ENCODE measurements at regions of chr21 and their contacts with region 1.

Region 1: GRCh38 chr21:46323227-46324128 is at the start of gene C21orf58:
- DNase-seq: peak; percentile 95
- H3K4me3 ChIP-seq: peak within 1 kb of the TSS; percentile 95
- H3K27ac ChIP-seq: peak within 1 kb of the TSS; percentile 94
- H3K27me3 ChIP-seq: no peaks in the 10 kb centered on the region
- CTCF ChIP-seq: no peak
- polyA plus RNA-seq, gene C21orf58: 1.2 TPM in 2 replicates

Region 2: DNA sequence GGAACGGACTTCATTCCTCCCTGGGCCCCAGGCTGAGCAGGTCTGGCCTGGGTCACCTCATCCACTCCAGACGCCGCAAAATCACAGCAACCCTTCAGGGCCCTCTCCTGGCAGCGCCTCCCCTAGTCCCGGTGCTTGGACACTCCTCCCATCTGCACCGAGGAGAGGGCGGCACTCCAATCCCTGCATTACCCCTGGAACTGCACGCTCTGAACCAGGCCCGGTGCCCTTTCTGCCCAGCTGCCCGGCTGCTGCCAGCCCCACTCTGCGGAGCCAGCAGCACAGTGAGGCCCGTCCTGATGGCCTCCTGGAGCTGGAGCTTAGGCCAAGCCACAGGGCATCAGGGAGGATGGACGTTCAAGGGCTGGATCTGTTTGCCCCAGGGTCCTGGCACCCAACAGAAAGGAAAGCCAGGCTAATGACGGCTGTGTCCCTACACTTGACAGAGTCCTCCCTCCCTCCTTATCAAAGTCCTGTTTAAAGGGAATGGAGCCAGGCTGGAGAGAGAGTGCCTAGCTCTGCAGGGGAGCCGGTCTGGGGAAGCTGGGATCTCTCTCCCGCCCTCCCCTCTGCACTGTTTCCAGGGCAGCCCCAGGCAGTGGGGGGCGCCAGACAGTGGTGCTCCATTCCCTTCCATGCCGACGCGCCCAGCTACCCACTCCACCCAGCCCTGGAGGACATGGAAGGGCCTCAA is 212.8 kb before region 1 on chr21:
- CTCF ChIA-PET with region 1: no interaction called
- POLR2A ChIA-PET with region 1: no interaction called
- DNase-seq: no peak
- H3K4me3 ChIP-seq: no peak overlapping the region
- H3K27ac ChIP-seq: no peak overlapping the region
- H3K27me3 ChIP-seq: no peaks in the 10 kb centered on the region
- CTCF ChIP-seq: no peak

Region 3: GRCh38 chr21:46144464-46145070 is 178.9 kb before region 1 on chr21:
- CTCF ChIA-PET with region 1: interaction called, 10 read pairs
- POLR2A ChIA-PET with region 1: interaction called, 3 read pairs
- DNase-seq: no peak
- H3K4me3 ChIP-seq: no peak overlapping the region
- H3K27ac ChIP-seq: no peak overlapping the region
- H3K27me3 ChIP-seq: peaks cover 3% of the 10 kb centered on the region
- CTCF ChIP-seq: no peak

Region 4: GRCh38 chr21:46210378-46211136 is 112.9 kb before region 1 on chr21:
- CTCF ChIA-PET with region 1: no interaction called
- POLR2A ChIA-PET with region 1: no interaction called
- DNase-seq: no peak
- H3K4me3 ChIP-seq: no peak overlapping the region
- H3K27ac ChIP-seq: no peak overlapping the region
- H3K27me3 ChIP-seq: no peaks in the 10 kb centered on the region
- CTCF ChIP-seq: no peak

Measured in AG04450 (cell line).